ENCODE measurements at regions of chr17 and their contacts with region 1.

Region 1: DNA sequence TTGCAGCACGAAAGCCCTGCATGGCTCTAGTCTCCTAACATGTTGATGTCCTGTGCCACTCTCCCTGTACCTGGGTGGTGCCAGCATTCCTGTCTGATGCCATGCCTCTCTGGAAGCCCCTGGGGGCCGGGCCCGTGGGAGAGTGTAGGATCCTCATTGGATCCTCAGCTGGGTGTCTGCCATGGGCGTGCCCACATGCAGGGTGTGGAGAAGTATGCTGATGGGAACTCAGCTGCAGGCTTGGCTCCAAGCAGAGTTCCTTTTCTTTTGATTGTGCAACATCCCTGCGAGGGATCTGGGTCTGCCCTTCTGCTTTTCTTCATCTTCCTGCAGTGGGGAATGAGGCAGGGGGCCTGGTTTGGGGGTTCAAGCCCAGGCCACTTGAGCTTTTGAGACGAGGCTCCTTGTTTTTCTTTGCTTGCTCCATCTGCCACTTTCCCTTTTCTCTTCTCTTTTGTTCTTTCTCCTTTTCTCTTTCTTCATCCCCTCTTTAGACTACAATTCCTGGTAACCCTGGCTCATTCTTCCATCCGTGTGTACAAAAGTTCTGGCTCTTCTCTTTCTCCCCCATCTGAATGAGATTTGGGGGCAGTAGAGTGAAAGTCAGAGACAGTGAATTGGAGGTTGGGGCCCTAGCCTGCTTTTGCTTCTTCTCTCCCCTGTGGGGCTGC is 32.9 kb downstream of the KSR1 start:
- DNase-seq: peak; percentile 87 to 91
- H3K4me3 ChIP-seq: no peak overlapping the region
- H3K27ac ChIP-seq: peak overlapping the region in 1 of 2 donors; percentile 39
- H3K4me1 ChIP-seq: peaks cover 0 to 28% (median 21%) of the 10 kb centered on the region in 4 donors
- H3K27me3 ChIP-seq: no peaks in the 10 kb centered on the region
- CTCF ChIP-seq: no peak

Region 2: GRCh38 chr17:27407916-27408846 is 81.0 kb before region 1 on chr17:
- intact Hi-C with region 1: loop called (anchors 10 kb)
- DNase-seq: no peak
- H3K4me3 ChIP-seq: no peak overlapping the region
- H3K27ac ChIP-seq: no peak overlapping the region
- H3K4me1 ChIP-seq: peaks cover 0 to 8% (median 6%) of the 10 kb centered on the region in 4 donors
- H3K27me3 ChIP-seq: no peaks in the 10 kb centered on the region
- CTCF ChIP-seq: no peak

Region 3: DNA sequence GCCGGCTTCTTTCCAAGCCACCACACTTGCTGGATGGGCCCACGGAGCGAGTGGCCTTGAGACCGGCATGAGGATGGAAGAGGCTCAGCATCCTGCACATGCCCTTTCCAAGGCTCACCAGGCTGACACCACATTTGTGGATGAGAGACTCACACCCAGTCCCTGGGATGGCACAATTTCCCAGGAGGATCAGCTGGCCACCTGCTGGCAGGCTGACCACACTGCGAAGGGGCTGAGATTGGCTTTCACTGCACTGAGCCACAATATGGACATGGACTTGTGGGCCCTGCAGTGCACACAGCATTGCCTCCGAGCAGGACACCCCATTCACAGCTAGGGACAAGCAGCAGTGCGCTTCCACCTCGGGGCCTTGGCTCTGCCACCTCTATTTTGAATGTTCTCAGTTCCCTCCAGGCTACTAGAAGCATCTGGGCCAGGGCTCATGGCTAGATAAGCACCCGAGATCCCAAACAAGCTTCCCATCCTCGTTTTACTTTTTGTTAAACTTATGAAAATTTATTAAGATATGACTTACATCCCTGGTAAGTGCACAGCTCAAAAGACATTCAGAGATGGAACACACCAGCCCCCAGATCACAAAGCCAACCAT is 58.2 kb before region 1 on chr17:
- intact Hi-C with region 1: no loop called
- DNase-seq: no peak
- H3K4me3 ChIP-seq: no peak overlapping the region
- H3K27ac ChIP-seq: no peak overlapping the region
- H3K4me1 ChIP-seq: no peaks in the 10 kb centered on the region
- H3K27me3 ChIP-seq: no peaks in the 10 kb centered on the region
- CTCF ChIP-seq: peak; percentile 46 to 52

Region 4: DNA sequence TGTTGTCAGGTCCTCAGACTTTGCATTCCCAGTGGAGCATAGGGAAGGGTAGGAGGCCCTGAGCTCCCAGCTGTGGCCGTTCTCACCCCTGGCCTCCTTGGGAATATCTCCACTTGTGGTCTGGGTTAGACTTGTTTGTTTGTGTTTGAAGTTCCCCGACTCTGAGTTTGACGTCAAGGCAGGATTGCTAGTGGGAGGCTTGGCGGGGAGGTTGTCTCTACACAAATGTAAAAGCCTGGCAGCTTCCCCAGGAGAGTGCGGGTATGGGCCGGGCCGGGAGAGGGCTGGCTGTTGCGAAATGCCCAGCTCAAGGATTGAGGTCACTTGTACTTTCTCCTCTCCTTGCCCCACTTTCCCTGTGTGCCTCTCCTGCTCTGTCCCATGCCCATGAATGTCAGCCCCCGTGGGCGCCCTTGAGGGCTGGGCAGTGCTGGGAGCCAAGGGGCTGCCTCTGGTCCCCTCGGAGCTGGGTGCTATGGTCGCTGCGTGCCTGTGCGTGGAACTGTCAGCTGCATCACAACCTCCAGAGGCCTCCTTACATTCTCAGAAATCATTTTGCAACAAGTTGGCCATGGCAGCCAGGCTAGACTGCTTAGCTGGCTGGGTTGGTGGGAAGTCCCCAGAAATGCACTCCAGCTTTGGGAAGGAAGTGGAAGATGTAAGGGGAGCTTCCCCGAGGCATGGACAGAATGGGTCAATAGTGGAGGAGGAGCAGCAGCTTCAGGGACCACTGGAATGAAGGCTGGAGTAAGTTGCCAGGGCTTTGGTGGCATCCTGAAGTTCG is 51.3 kb after region 1 on chr17:
- intact Hi-C with region 1: no loop called
- DNase-seq: peak; percentile 88 to 97
- H3K4me3 ChIP-seq: peak overlapping the region in 1 of 2 donors; percentile 8
- H3K27ac ChIP-seq: peak overlapping the region; percentile 65 to 86
- H3K4me1 ChIP-seq: peaks cover 4 to 40% (median 34%) of the 10 kb centered on the region in 4 donors
- H3K27me3 ChIP-seq: no peaks in the 10 kb centered on the region
- CTCF ChIP-seq: no peak

Measured in tibial artery (tissue), 4 donors.